Colonic mucosa (tissue), 4 donors: ENCODE measurements at regions of chr13 and their contacts with region 1.

Region 1: DNA sequence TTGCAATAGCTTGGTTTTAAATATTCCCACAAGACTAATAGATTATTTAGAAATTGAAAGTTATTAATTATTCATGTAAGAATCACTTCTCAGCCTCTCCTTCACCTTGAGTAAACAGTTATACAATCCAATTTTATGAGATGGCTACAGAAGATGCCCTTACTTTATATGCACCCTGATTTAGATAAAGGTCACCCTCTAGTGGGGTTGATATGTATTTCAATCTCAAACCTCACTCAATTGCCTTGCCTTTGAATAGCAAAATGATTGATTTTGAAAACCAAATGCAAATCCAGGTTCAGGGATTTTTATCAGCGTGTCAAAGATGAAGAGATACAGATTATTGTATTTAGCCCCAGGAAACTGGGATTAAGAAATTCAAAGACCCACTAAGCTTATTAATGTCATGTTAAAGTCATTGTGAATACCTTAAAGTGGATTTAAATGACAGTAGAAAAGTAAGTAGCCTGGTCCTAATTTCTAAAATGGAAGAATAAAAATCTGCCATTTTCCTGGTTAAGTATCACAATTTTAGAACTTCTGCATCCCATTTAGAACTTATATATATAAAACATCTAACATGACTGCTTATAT is 305.1 kb downstream of the ITGBL1 start:
- DNase-seq: no peak
- H3K4me3 ChIP-seq: no peak overlapping the region
- H3K27ac ChIP-seq: no peak overlapping the region
- H3K4me1 ChIP-seq: no peaks in the 10 kb centered on the region
- H3K27me3 ChIP-seq: no peaks in the 10 kb centered on the region
- CTCF ChIP-seq: peak; percentile 27

Region 2: GRCh38 chr13:101514788-101515187 is 242.8 kb before region 1 on chr13:
- intact Hi-C with region 1: loop called (anchors 2 kb)
- DNase-seq: peak; percentile 20
- H3K4me3 ChIP-seq: no peak overlapping the region
- H3K27ac ChIP-seq: no peak overlapping the region
- H3K4me1 ChIP-seq: no peaks in the 10 kb centered on the region
- H3K27me3 ChIP-seq: no peaks in the 10 kb centered on the region
- CTCF ChIP-seq: peak; percentile 50